GM12878 (cell line): ENCODE measurements at regions of chr11 and their contacts with region 1.

Region 1: GRCh38 chr11:99671808-99672409 is 651.2 kb downstream of the CNTN5 start:
- DNase-seq: no peak
- ATAC-seq: no peak
- H3K4me3 ChIP-seq: no peak overlapping the region
- H3K27ac ChIP-seq: no peak overlapping the region
- H3K4me1 ChIP-seq: no peaks in the 10 kb centered on the region
- H3K27me3 ChIP-seq: no peaks in the 10 kb centered on the region
- CTCF ChIP-seq: no peak
- EP300 ChIP-seq: no peak
- POLR2A ChIP-seq: no peak
- RAD21 ChIP-seq: no peak

Region 2: DNA sequence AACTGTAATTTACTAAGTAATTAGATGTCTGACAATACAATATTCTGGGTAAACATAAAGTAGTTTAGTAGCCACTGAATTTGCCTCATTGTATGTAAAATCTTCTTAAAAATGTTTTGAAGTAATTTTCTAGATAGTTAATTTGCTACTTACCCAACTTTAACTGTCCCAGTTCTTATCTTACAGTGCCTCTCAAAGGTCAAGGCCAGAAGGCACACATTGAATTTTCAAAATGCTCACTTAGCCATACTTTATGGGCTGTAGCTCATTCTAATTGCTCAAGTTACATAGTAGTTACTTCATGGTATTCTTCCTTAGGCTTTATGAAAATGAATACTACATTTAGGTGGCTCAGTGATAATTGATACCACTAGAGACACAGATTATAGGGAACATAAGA is 15.4 kb after region 1 on chr11:
- CTCF ChIA-PET with region 1: interaction called, 4 read pairs
- POLR2A ChIA-PET with region 1: no interaction called
- RAD21 ChIA-PET with region 1: no interaction called
- SMC1A ChIA-PET with region 1: interaction called, 11 read pairs
- in situ Hi-C with region 1: no loop called
- intact Hi-C with region 1: no loop called
- DNase-seq: no peak
- ATAC-seq: peak; percentile 39; the same call in 1 of the 3 replicates
- H3K4me3 ChIP-seq: no peak overlapping the region
- H3K27ac ChIP-seq: no peak overlapping the region
- H3K4me1 ChIP-seq: no peaks in the 10 kb centered on the region
- H3K27me3 ChIP-seq: no peaks in the 10 kb centered on the region
- CTCF ChIP-seq: peak in 1 of 3 experiments; percentile 30; a peak in 2 of 6 replicates
- EP300 ChIP-seq: no peak
- POLR2A ChIP-seq: no peak
- RAD21 ChIP-seq: peak; percentile 59